ENCODE measurements at regions of chr12 and their contacts with region 1.

Region 1: DNA sequence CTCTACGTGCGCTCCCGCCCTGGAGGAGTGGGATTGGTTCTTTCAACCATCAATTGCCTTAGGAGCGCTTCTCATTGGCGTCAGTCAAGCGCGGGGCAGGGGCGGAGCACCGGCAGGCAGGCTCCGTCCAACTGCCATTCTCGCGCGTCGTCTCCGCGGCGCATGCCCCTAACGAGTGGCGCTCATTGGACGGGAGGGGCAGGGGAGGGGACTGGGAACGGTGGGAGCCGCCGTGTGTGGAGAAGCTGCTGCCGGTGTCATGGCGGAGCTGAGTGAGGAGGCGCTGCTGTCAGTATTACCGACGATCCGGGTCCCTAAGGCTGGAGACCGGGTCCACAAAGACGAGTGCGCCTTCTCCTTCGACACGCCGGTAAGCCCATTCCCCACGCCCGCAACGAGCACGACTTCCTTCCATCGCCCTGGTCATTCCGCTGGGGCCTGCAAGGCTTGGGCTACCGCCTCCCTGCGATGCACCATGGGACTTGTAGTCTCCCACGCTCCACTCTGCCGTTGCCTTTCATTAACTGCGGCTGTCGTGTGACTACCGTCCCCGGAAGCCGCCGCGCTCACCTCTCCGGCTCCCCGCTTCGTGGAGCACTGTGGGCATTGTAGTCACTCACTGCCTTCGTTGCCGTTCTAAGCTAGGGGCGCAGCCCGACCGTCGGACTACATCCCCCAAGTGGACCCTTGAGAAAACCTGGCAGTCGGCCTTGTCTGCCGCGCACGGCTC is at the start of gene USP5:
- DNase-seq: peak; percentile 99
- H3K4me3 Mint-ChIP-seq: peak within 1 kb of the TSS; percentile 85
- H3K27ac Mint-ChIP-seq: peak within 1 kb of the TSS; percentile 100
- H3K4me1 Mint-ChIP-seq: peaks cover 50% of the 10 kb centered on the region
- H3K27me3 Mint-ChIP-seq: no peaks in the 10 kb centered on the region
- total RNA-seq, gene USP5: 91.4 to 109 TPM

Region 2: DNA sequence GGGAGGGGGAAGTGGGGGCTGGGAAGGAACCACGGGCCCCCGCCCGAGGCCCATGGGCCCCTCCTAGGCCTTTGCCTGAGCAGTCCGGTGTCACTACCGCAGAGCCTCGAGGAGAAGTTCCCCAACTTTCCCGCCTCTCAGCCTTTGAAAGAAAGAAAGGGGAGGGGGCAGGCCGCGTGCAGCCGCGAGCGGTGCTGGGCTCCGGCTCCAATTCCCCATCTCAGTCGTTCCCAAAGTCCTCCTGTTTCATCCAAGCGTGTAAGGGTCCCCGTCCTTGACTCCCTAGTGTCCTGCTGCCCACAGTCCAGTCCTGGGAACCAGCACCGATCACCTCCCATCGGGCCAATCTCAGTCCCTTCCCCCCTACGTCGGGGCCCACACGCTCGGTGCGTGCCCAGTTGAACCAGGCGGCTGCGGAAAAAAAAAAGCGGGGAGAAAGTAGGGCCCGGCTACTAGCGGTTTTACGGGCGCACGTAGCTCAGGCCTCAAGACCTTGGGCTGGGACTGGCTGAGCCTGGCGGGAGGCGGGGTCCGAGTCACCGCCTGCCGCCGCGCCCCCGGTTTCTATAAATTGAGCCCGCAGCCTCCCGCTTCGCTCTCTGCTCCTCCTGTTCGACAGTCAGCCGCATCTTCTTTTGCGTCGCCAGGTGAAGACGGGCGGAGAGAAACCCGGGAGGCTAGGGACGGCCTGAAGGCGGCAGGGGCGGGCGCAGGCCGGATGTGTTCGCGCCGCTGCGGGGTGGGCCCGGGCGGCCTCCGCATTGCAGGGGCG is 318.0 kb before region 1 on chr12 and contains the start of gene GAPDH:
- CTCF ChIA-PET with region 1: no interaction called
- POLR2A ChIA-PET with region 1: interaction called, 15 read pairs
- DNase-seq: peak; percentile 93
- H3K4me3 Mint-ChIP-seq: peak within 1 kb of the TSS; percentile 96
- H3K27ac Mint-ChIP-seq: peak within 1 kb of the TSS; percentile 97
- H3K4me1 Mint-ChIP-seq: peaks cover 53% of the 10 kb centered on the region
- H3K27me3 Mint-ChIP-seq: no peaks in the 10 kb centered on the region
- total RNA-seq, gene GAPDH: 5,691 to 5,753 TPM

Region 3: DNA sequence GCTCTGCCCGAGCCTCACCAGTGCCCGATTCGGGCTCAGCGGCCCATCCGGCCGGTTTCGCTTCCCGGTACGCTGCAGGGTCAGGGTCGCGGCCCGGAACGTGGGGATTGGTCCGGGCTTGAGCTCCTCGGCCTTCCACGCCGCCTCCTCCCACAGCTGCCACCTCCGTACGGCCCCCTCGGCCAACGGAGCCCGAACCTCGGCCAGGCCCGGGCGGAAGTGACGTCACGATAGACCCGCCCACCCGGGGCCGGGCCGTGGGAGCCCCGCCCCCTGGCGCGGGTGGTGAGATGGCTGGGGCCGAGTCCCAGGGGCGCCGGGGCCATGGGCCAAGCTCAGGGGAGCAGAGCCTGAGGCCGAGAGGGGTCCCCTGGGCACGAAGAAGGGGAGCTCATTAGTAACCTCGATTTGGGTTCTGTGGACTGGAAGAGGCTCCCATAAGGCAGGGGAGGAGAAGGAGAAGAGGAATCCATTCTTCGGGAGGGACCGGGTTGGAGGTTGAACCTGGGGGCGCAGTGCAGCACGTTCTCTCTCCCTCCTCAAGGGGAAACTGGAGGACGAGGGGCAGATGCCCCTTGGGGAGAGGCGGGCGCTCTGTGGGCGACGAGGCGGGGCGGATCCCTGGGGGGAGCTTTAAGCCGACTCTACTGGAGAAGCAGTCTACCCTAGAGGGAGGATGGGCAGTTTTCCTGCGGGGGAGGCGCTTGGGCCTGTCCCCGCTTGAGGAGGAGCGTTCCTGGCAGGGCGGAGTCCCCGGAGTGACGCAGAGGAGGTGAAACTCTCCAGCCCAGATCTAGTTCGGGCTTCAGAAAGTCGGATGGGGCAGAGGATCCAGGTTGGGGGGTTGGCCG is 98.9 kb before region 1 on chr12 and contains the start of gene MLF2:
- CTCF ChIA-PET with region 1: interaction called, 35 read pairs
- POLR2A ChIA-PET with region 1: interaction called, 37 read pairs
- DNase-seq: peak; percentile 98
- H3K4me3 Mint-ChIP-seq: peak within 1 kb of the TSS; percentile 92
- H3K27ac Mint-ChIP-seq: peak within 1 kb of the TSS; percentile 90
- H3K4me1 Mint-ChIP-seq: peaks cover 25% of the 10 kb centered on the region
- H3K27me3 Mint-ChIP-seq: peaks cover 4% of the 10 kb centered on the region
- total RNA-seq, gene MLF2: 101 to 108 TPM

Region 4: DNA sequence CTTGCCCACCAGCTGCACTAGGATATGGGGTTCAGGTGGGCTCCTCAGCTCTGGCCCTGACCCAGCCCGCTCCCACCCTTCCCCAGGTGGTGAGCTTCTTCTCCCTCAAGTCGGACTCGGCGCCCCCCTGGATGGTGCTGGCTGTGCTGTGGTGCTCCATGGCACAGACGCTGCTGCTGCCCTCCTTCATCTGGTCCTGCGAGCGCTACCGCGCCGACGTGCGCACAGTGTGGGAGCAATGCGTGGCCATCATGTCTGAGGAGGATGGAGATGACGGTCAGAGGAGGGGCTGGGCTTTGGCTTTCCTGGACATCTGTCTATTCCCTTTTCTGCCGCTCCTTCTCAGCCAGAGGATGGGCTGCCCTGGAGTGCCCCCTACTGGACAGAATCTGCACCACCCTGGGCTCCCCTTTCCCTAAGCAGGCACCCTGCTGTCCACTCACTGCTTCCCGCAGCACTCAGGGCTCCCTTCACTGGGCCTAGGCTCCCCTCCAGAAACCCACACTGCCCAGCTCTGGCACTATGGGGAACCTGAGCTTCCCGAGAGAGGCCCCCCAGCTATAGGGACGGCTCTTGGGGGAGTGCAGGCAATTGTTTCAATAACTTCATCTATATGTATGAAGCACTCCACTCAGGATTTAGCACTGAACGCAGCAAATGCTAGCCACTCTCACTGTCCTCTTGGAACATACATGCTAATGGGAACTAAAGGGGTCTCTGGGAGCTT is 26.5 kb before region 1 on chr12:
- CTCF ChIA-PET with region 1: interaction called, 5 read pairs
- POLR2A ChIA-PET with region 1: interaction called, 53 read pairs
- DNase-seq: peak; percentile 84
- H3K4me3 Mint-ChIP-seq: no peak overlapping the region
- H3K27ac Mint-ChIP-seq: no peak overlapping the region
- H3K4me1 Mint-ChIP-seq: peaks cover 27% of the 10 kb centered on the region
- H3K27me3 Mint-ChIP-seq: peaks cover 72% of the 10 kb centered on the region

Region 5: DNA sequence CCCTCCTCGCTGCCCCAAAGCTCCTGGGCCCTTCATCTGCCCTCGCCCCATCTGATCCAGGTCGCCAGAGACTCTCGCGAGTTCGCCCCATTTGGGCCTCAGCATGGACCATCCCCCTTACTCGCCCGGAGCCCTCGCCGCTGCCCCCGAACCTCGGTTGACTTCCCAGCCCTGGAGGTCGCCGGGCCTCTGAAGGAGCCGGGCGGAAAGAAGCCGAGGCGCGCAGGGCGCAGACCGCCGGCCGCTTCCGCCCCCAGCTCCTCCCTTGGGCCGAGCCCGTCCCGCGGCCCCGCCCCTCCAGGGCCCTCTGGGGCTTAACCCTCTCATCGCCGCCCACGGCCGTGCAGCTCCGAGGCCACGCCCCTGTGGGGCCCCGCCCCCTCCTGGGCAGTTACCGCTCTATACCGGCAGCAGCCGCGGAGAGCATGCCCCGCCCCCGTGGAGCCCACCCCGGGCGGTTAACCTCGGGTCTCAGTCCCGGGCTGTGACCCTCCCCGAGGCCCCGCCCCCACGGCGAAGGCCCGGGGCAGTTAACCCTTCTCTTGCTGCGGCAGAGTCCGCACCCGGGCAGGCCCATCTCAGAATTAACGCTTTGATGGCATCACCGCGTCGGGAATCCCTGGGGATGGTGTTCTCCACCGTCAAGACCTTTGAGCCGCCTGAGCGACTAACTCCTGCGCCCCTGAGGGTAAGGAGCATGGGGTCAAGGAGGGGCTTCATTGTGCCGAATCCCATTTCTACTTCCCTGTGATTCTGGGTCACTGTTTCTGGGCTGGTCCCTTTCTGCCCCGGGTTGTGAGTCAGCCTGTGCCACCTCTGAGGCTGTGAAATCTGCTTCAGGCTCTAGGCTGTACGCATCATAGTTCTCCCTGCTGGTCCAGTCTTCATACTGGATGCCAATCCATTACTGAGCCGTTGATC is 21.3 kb after region 1 on chr12 and contains the start of gene SPSB2:
- CTCF ChIA-PET with region 1: interaction called, 161 read pairs
- POLR2A ChIA-PET with region 1: interaction called, 312 read pairs
- DNase-seq: peak; percentile 99
- H3K4me3 Mint-ChIP-seq: peak within 1 kb of the TSS; percentile 93
- H3K27ac Mint-ChIP-seq: peak within 1 kb of the TSS; percentile 90
- H3K4me1 Mint-ChIP-seq: peaks cover 61% of the 10 kb centered on the region
- H3K27me3 Mint-ChIP-seq: no peaks in the 10 kb centered on the region
- total RNA-seq, gene SPSB2: 11.1 to 11.2 TPM

Region 6: GRCh38 chr12:6937481-6938297 is 85.6 kb after region 1 on chr12:
- CTCF ChIA-PET with region 1: interaction called, 8 read pairs
- POLR2A ChIA-PET with region 1: interaction called, 37 read pairs
- DNase-seq: peak; percentile 96
- H3K4me3 Mint-ChIP-seq: peak overlapping the region; percentile 88
- H3K27ac Mint-ChIP-seq: peak overlapping the region; percentile 95
- H3K4me1 Mint-ChIP-seq: peaks cover 54% of the 10 kb centered on the region
- H3K27me3 Mint-ChIP-seq: no peaks in the 10 kb centered on the region

Region 7: GRCh38 chr12:7108796-7109571 is 256.9 kb after region 1 on chr12 and contains the start of gene C1RL:
- CTCF ChIA-PET with region 1: interaction called, 6 read pairs
- POLR2A ChIA-PET with region 1: interaction called, 13 read pairs
- DNase-seq: peak; percentile 83
- H3K4me3 Mint-ChIP-seq: peak within 1 kb of the TSS; percentile 91
- H3K27ac Mint-ChIP-seq: peak within 1 kb of the TSS; percentile 94
- H3K4me1 Mint-ChIP-seq: peaks cover 61% of the 10 kb centered on the region
- H3K27me3 Mint-ChIP-seq: no peaks in the 10 kb centered on the region
- total RNA-seq, gene C1RL: 26.5 to 28.8 TPM

Measured in activated CD4-positive, alpha-beta memory T cell treated with anti-CD3 and anti-CD28 coated beads, Interleukin-2, amount 10 ng/mL, durations not matched to agents 7 days and 5 days (primary cell).